Activated CD4-positive, alpha-beta T cell treated with anti-CD3 and anti-CD28 coated beads for 36 hours (primary cell): ENCODE measurements at regions of chr10 and their contacts with region 1.

Region 1: GRCh38 chr10:109914966-109915365 is 8.3 kb downstream of the XPNPEP1 start:
- DNase-seq: peak; percentile 53
- ATAC-seq: peak; percentile 91
- H3K4me3 Mint-ChIP-seq: no peak overlapping the region
- H3K27ac Mint-ChIP-seq: peak overlapping the region; percentile 81
- H3K4me1 Mint-ChIP-seq: peaks cover 89% of the 10 kb centered on the region
- H3K27me3 Mint-ChIP-seq: no peaks in the 10 kb centered on the region

Region 2: GRCh38 chr10:109889867-109890266 is 25.1 kb before region 1 on chr10:
- CTCF ChIA-PET with region 1: interaction called, 13 read pairs
- POLR2A ChIA-PET with region 1: no interaction called
- intact Hi-C with region 1: no loop called
- DNase-seq: no peak
- ATAC-seq: no peak
- H3K4me3 Mint-ChIP-seq: no peak overlapping the region
- H3K27ac Mint-ChIP-seq: peak overlapping the region; percentile 66
- H3K4me1 Mint-ChIP-seq: peaks cover 35% of the 10 kb centered on the region
- H3K27me3 Mint-ChIP-seq: no peaks in the 10 kb centered on the region